T-cell (primary cell): ENCODE measurements at regions of chr3 and their contacts with region 1.

Region 1: DNA sequence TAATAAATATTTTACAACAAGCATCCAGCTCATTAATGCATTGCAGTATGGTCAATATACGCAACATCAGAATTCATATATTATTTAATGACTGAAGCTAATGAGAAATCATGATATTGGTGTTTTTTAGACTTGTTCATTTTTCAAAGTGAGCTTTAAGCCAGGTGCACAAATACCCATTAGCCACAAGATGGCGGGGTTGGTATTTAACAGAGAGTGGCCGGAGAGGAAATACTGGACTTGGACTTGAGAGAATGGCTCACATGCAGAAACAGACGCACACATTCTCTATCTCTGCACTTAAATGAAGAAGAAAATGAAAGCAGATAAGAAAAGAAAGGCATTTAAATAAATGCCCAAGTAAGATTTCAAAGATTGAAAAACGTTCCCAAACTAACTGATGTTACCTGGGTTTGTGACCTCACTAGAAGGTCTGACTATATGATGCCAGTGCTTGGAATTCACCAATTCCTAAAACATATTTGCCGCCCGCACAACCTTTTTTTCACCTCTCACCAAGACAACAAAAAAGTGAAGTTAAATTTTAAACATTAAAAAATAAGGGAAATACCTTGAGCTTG is 21.2 kb upstream of the CRBN start:
- DNase-seq: peak in 7 of 35 experiments; percentile 12 to 64 (median 24)
- ATAC-seq: no peak
- H3K4me3 ChIP-seq: no peak overlapping the region
- H3K4me3 Mint-ChIP-seq: peak overlapping the region in 1 of 3 donors; percentile 11
- H3K27ac ChIP-seq: no peak overlapping the region
- H3K27ac Mint-ChIP-seq: peak overlapping the region in 1 of 2 donors; percentile 18
- H3K4me1 ChIP-seq: peaks cover 0 to 15% of the 10 kb centered on the region in 2 experiments
- H3K4me1 Mint-ChIP-seq: peaks cover 15 to 24% (median 22%) of the 10 kb centered on the region in 3 donors
- H3K27me3 ChIP-seq: no peaks in the 10 kb centered on the region
- H3K27me3 Mint-ChIP-seq: no peaks in the 10 kb centered on the region

Region 2: GRCh38 chr3:2921903-2922302 is 278.8 kb before region 1 on chr3:
- CTCF ChIA-PET with region 1: no interaction called
- POLR2A ChIA-PET with region 1: no interaction called
- DNase-seq: peak in 1 of 35 experiments; percentile 19
- ATAC-seq: no peak
- H3K4me3 ChIP-seq: no peak overlapping the region
- H3K4me3 Mint-ChIP-seq: no peak overlapping the region
- H3K27ac ChIP-seq: no peak overlapping the region
- H3K27ac Mint-ChIP-seq: no peak overlapping the region
- H3K4me1 ChIP-seq: no peaks in the 10 kb centered on the region
- H3K4me1 Mint-ChIP-seq: no peaks in the 10 kb centered on the region
- H3K27me3 ChIP-seq: no peaks in the 10 kb centered on the region
- H3K27me3 Mint-ChIP-seq: peaks cover 3 to 7% of the 10 kb centered on the region in 2 donors

Region 3: GRCh38 chr3:3134750-3135448 is 65.8 kb before region 1 on chr3:
- CTCF ChIA-PET with region 1: no interaction called
- POLR2A ChIA-PET with region 1: no interaction called
- DNase-seq: no peak
- ATAC-seq: peak in 2 of 4 experiments; percentile 28 to 29
- H3K4me3 ChIP-seq: no peak overlapping the region
- H3K4me3 Mint-ChIP-seq: peak overlapping the region in 1 of 3 donors; percentile 2
- H3K27ac ChIP-seq: no peak overlapping the region
- H3K27ac Mint-ChIP-seq: peak overlapping the region; percentile 66 to 75
- H3K4me1 ChIP-seq: peaks cover 4 to 9% of the 10 kb centered on the region in 2 experiments
- H3K4me1 Mint-ChIP-seq: peaks cover 57 to 66% (median 62%) of the 10 kb centered on the region in 3 donors
- H3K27me3 ChIP-seq: no peaks in the 10 kb centered on the region
- H3K27me3 Mint-ChIP-seq: no peaks in the 10 kb centered on the region

Region 4: GRCh38 chr3:3260870-3261269 is 60.1 kb after region 1 on chr3:
- CTCF ChIA-PET with region 1: no interaction called
- POLR2A ChIA-PET with region 1: no interaction called
- DNase-seq: no peak
- ATAC-seq: no peak
- H3K4me3 ChIP-seq: no peak overlapping the region
- H3K4me3 Mint-ChIP-seq: no peak overlapping the region
- H3K27ac ChIP-seq: no peak overlapping the region
- H3K27ac Mint-ChIP-seq: no peak overlapping the region
- H3K4me1 ChIP-seq: no peaks in the 10 kb centered on the region
- H3K4me1 Mint-ChIP-seq: no peaks in the 10 kb centered on the region
- H3K27me3 ChIP-seq: no peaks in the 10 kb centered on the region
- H3K27me3 Mint-ChIP-seq: peaks cover 0 to 6% of the 10 kb centered on the region in 2 donors

Region 5: DNA sequence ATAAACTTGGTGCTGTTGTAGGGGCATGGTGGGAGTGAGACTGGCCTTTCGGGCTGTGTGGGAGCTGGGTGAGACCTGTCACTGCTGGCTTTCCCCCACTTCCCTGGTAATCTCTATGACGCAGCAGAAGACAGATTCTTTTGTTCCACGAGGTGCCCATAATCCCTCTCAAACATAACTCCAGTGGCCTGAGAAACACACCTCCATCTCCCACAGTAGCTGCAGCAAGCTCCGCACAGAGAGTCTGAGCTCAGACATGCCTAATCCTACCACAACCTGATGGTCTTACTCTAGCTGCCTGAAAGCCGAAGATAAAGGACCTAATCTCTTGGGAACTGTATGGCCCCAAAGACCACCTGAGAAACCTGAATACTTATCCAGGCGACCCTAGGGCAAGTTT is 204.4 kb after region 1 on chr3:
- CTCF ChIA-PET with region 1: no interaction called
- POLR2A ChIA-PET with region 1: no interaction called
- DNase-seq: no peak
- ATAC-seq: no peak
- H3K4me3 ChIP-seq: no peak overlapping the region
- H3K4me3 Mint-ChIP-seq: no peak overlapping the region
- H3K27ac ChIP-seq: no peak overlapping the region
- H3K27ac Mint-ChIP-seq: no peak overlapping the region
- H3K4me1 ChIP-seq: no peaks in the 10 kb centered on the region
- H3K4me1 Mint-ChIP-seq: no peaks in the 10 kb centered on the region
- H3K27me3 ChIP-seq: peaks cover 0 to 13% of the 10 kb centered on the region in 2 experiments
- H3K27me3 Mint-ChIP-seq: peaks cover 6 to 23% of the 10 kb centered on the region in 2 donors

Region 6: DNA sequence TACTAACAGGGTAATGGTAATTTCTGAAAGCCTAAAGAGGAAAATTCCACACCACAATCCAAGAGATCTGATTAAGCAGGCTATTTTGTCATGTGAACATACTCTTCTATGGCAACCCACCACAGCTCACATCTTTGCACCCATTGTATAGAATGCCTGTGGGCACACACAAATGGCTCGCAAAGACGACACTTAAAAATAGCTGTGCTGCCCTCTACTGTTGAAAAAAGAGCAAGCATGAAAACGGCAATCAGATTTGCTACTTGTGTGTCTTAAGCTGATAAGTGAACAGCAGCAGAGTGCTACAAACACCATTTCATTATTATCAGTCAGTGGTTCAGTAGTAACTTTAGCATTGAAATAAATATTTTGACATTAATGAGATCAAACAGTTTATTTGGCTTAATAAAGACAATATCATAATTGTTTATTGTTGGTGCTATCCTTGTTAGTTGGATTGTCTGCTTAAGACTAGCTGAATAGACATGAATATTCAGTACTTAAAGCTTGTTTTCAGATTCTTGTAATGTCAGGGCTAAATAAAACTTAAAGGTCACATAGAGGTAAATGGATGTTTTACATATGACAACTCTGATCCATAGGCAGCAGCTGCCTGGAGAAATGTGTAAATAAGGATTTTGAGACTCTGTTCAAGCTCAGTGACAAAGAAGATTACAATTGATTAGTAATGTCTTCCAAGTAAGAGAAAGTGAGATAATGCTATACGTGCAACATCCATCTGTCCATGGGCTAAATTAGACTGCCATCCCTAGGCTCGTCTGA is 797.6 kb after region 1 on chr3:
- CTCF ChIA-PET with region 1: interaction called, 19 to 25 read pairs
- POLR2A ChIA-PET with region 1: no interaction called
- DNase-seq: peak in 6 of 35 experiments; percentile 0 to 37 (median 1)
- ATAC-seq: peak in 1 of 4 experiments; percentile 27
- H3K4me3 ChIP-seq: no peak overlapping the region
- H3K4me3 Mint-ChIP-seq: no peak overlapping the region
- H3K27ac ChIP-seq: no peak overlapping the region
- H3K27ac Mint-ChIP-seq: no peak overlapping the region
- H3K4me1 ChIP-seq: no peaks in the 10 kb centered on the region
- H3K4me1 Mint-ChIP-seq: no peaks in the 10 kb centered on the region
- H3K27me3 ChIP-seq: no peaks in the 10 kb centered on the region
- H3K27me3 Mint-ChIP-seq: no peaks in the 10 kb centered on the region

Region 7: DNA sequence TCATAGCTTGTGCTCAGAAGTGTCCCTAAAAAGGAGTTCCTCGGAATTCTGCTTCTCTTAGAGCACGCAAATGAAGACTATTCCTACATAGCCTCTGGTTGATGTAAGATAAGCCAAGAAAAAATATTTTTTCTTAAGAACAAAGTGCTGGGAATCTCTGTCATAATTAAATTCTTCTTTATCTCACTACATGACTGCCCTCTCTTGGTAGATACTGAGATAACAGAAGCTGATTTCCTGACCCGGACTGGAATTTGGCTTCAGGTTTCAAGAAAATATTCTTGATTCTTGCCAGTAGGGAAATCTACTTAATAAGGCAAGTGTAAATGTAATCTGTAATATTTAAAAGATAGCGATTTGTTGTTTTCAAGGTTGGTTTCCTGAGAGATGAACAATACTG is 1071.1 kb after region 1 on chr3:
- CTCF ChIA-PET with region 1: interaction called, 13 to 28 read pairs
- POLR2A ChIA-PET with region 1: no interaction called
- DNase-seq: peak in 1 of 35 experiments; percentile 29
- ATAC-seq: no peak
- H3K4me3 ChIP-seq: no peak overlapping the region
- H3K4me3 Mint-ChIP-seq: no peak overlapping the region
- H3K27ac ChIP-seq: no peak overlapping the region
- H3K27ac Mint-ChIP-seq: no peak overlapping the region
- H3K4me1 ChIP-seq: peaks cover 4 to 10% of the 10 kb centered on the region in 2 experiments
- H3K4me1 Mint-ChIP-seq: peaks cover 8 to 17% (median 14%) of the 10 kb centered on the region in 3 donors
- H3K27me3 ChIP-seq: no peaks in the 10 kb centered on the region
- H3K27me3 Mint-ChIP-seq: no peaks in the 10 kb centered on the region

Region 8: DNA sequence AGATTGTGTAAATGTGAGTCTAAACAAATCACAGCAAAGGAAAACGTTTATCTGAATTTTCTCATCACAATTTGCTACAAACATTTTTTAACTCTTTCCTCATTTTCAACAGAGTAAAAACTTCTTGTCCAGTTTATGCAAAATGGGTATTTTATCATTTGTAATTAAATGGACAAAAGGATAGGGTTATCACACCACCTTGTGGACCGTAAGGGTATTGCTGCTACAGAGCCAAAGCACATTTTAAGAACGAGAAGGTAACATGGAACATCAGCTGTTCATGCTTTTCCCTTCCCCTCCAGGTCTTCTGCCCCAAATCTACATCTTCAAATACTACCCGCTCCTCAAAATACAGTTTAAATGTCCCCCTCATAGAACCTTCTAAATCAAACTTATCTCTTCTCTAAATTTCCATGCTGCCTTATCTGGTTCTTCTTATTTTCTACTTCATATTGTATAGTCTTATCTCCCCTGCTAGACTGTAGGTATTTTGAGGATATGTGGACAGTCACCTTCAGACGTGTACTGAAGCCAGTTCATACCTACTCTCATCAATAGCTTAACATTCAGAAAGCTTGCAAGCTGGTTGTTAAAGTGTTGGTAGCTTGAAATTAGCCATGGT is 1089.7 kb after region 1 on chr3:
- CTCF ChIA-PET with region 1: interaction called, 5 to 56 read pairs
- POLR2A ChIA-PET with region 1: no interaction called
- DNase-seq: peak in 17 of 35 experiments; percentile 4 to 70 (median 13)
- ATAC-seq: peak in 1 of 4 experiments; percentile 40
- H3K4me3 ChIP-seq: no peak overlapping the region
- H3K4me3 Mint-ChIP-seq: no peak overlapping the region
- H3K27ac ChIP-seq: no peak overlapping the region
- H3K27ac Mint-ChIP-seq: no peak overlapping the region
- H3K4me1 ChIP-seq: peaks cover 0 to 16% of the 10 kb centered on the region in 2 experiments
- H3K4me1 Mint-ChIP-seq: peaks cover 13 to 17% (median 16%) of the 10 kb centered on the region in 3 donors
- H3K27me3 ChIP-seq: no peaks in the 10 kb centered on the region
- H3K27me3 Mint-ChIP-seq: peaks cover 0 to 2% of the 10 kb centered on the region in 2 donors